ENCODE measurements at regions of chr10 and their contacts with region 1.

Region 1: DNA sequence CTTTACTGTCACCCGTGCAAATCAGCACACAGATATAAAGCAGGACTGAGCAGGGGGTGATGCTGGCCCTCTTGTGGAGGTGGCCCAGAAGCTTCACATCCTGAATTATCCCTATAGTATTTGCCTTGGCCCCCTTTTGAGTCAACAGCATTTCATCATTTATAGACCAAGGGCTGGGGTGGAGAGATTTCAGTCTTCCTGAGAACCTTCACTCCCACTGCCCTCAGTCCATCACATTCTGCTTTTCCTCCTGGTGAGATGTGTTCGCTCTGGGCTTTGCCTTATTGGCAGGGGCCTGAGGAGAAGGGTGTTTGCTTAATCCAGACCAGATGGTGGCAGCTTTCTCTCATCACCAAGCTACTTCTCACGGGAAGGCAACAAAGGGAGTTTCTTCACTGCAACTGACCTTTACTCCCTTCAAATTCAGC is 47.7 kb downstream of the NOC3L start:
- DNase-seq: peak in 1 of 2 donors; percentile 43
- H3K4me3 ChIP-seq: no peak overlapping the region
- H3K27ac ChIP-seq: no peak overlapping the region
- H3K4me1 ChIP-seq: peaks cover 0 to 20% (median 9%) of the 10 kb centered on the region in 4 donors
- H3K27me3 ChIP-seq: no peaks in the 10 kb centered on the region
- CTCF ChIP-seq: no peak
- EP300 ChIP-seq: no peak
- POLR2A ChIP-seq: no peak

Region 2: GRCh38 chr10:93921338-93921737 is 393.7 kb before region 1 on chr10:
- intact Hi-C with region 1: loop called (anchors 10 kb)
- DNase-seq: no peak
- H3K4me3 ChIP-seq: no peak overlapping the region
- H3K27ac ChIP-seq: no peak overlapping the region
- H3K4me1 ChIP-seq: peaks cover 0 to 11% (median 3%) of the 10 kb centered on the region in 4 donors
- H3K27me3 ChIP-seq: no peaks in the 10 kb centered on the region
- CTCF ChIP-seq: peak in 1 of 7 experiments; percentile 11
- EP300 ChIP-seq: no peak
- POLR2A ChIP-seq: no peak

Region 3: GRCh38 chr10:94194256-94194655 is 120.8 kb before region 1 on chr10:
- intact Hi-C with region 1: no loop called
- DNase-seq: no peak
- H3K4me3 ChIP-seq: no peak overlapping the region
- H3K27ac ChIP-seq: peak overlapping the region in 3 of 5 donors; percentile 2 to 9 (median 7)
- H3K4me1 ChIP-seq: peaks cover 0 to 35% (median 8%) of the 10 kb centered on the region in 4 donors
- H3K27me3 ChIP-seq: no peaks in the 10 kb centered on the region
- CTCF ChIP-seq: no peak
- EP300 ChIP-seq: no peak
- POLR2A ChIP-seq: no peak

Measured in stomach (tissue), 19 donors.